BJ (cell line): ENCODE measurements at regions of chr17 and their contacts with region 1.

Region 1: GRCh38 chr17:72976971-72977770 is 115.3 kb downstream of the SLC39A11 start:
- DNase-seq: peak; percentile 60
- H3K4me3 ChIP-seq: no peak overlapping the region
- H3K27me3 ChIP-seq: no peaks in the 10 kb centered on the region
- CTCF ChIP-seq: no peak

Region 2: DNA sequence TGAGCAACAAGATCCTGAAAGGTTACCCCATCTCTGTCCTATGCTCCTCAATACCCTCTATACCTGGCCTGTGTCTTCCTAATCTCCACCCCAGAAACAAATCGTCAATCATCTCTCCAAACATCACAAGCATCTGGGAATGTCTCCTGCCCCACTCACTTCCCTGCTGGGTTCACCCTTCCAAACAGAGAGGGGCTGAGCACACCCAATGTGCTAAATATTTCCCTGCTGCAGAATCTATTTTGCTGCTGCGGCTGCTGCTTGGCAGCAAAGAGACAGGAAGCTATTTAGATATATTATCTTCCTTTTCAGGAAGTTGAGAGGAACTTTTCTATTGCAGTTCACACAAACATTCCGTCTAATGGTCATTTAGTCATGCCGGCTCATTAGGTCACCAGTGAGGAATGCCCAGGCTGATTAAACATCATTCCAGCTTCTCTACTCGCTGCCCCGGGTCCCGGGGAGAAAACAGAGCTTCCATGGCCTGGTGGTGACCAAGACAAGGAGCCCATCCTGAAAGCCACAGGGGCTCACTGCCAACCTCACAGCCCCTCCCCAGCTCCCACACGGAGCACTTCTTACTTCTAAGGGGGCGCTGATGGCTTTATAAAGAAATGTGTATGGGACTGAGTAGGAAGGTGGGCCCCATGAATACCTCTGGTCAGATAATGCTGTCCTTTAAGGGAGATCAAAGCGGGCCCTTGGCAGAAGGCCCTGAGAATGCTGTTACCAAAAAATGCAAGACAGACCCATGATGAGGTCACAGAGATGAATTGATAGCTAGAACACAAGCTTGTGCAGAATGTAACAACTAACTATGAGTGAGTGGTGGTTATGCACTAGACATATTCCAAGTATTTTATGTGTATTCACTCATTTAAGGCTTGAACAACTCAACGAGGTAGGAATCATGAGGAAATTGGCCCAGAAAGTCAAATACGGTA is 638.1 kb before region 1 on chr17:
- CTCF ChIA-PET with region 1: no interaction called
- POLR2A ChIA-PET with region 1: no interaction called
- DNase-seq: peak; percentile 86
- H3K4me3 ChIP-seq: no peak overlapping the region
- H3K27me3 ChIP-seq: no peaks in the 10 kb centered on the region
- CTCF ChIP-seq: no peak

Region 3: DNA sequence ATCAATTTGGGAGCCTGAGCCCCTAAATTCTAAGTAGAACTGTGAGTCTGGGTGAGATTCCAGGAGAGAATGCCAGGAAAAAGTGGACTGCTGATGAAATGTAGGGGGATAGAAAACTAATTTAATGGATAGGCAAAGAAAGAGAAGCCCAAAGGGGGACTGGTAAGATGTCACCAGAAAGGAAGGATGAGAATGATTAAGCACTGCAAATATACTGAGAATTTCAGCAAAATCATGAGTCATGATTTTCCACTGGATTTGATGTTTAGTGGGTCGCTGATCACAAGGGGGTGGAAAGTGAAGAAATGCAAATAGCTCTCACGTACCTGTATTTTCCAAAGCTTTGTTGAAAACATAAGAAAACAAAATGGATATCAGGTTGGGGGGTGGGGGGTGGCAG is 86.5 kb before region 1 on chr17:
- CTCF ChIA-PET with region 1: no interaction called
- POLR2A ChIA-PET with region 1: interaction called, 15 read pairs
- DNase-seq: no peak
- H3K4me3 ChIP-seq: no peak overlapping the region
- H3K27me3 ChIP-seq: no peaks in the 10 kb centered on the region
- CTCF ChIP-seq: no peak